Activated CD4-positive, alpha-beta memory T cell treated with anti-CD3 and anti-CD28 coated beads for 36 hours (primary cell): ENCODE measurements at regions of chr2 and their contacts with region 1.

Region 1: GRCh38 chr2:55419679-55420438 is at the start of gene CCDC88A:
- DNase-seq: peak; percentile 92
- H3K4me3 Mint-ChIP-seq: peak within 1 kb of the TSS; percentile 81
- H3K27ac Mint-ChIP-seq: peak within 1 kb of the TSS; percentile 69
- H3K4me1 Mint-ChIP-seq: peaks cover 23% of the 10 kb centered on the region
- H3K27me3 Mint-ChIP-seq: peaks cover 4% of the 10 kb centered on the region
- total RNA-seq, gene CCDC88A: 13.2 to 14.1 TPM

Region 2: GRCh38 chr2:55090702-55091101 is 329.2 kb before region 1 on chr2:
- CTCF ChIA-PET with region 1: no interaction called
- POLR2A ChIA-PET with region 1: no interaction called
- intact Hi-C with region 1: no loop called
- DNase-seq: no peak
- H3K4me3 Mint-ChIP-seq: no peak overlapping the region
- H3K27ac Mint-ChIP-seq: no peak overlapping the region
- H3K4me1 Mint-ChIP-seq: peaks cover 8% of the 10 kb centered on the region
- H3K27me3 Mint-ChIP-seq: no peaks in the 10 kb centered on the region

Region 3: GRCh38 chr2:55232084-55232862 is 187.6 kb before region 1 on chr2 and contains the starts of genes CLHC1 and RPS27A:
- CTCF ChIA-PET with region 1: no interaction called
- POLR2A ChIA-PET with region 1: no interaction called
- intact Hi-C with region 1: loop called (anchors 1 kb)
- DNase-seq: peak; percentile 95
- H3K4me3 Mint-ChIP-seq: peak within 1 kb of the TSS; percentile 96
- H3K27ac Mint-ChIP-seq: peak within 1 kb of the TSS; percentile 94
- H3K4me1 Mint-ChIP-seq: peaks cover 60% of the 10 kb centered on the region
- H3K27me3 Mint-ChIP-seq: no peaks in the 10 kb centered on the region
- total RNA-seq, gene CLHC1: 5.5 to 7.5 TPM
- total RNA-seq, gene RPS27A: 1,372 to 1,402 TPM

Region 4: DNA sequence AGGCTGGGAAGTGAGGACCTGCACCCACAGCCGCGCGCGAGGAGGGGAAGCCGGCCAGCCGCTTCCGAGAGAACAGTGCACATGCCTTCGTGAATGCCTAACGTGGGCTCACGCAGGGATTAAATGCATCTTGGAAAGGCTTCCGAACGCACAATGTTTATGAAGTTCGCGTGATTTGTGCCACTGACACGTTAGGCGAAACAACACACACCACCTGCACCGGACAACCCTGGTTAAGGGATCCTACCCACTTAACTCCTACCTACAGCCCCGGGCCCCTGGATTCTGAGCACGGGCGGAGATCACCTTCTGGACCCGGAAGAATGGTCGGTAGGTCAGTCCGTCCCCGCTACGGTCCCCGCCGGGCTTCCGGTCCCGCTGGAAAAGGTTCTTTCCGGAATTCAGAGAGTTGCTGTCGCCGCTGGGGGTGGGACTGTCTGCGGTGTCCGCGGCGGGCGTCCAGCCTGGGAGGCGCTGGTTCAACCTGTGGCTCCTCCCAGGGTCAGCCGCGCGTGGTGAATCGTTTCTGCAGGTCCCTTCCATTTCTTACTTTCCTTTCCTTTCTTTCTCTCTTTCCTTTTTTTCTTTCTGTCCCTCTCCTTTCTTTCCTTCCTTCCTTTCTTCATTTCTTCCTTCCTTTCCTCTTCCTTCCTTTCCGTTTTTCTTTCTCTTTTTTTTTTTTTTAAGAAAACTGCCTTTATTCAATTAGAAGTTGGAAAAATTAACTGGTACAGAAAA is 150.8 kb before region 1 on chr2 and contains the start of gene MTIF2:
- CTCF ChIA-PET with region 1: interaction called, 3 read pairs
- POLR2A ChIA-PET with region 1: interaction called, 7 read pairs
- intact Hi-C with region 1: loop called (anchors 1 kb)
- DNase-seq: peak; percentile 95
- H3K4me3 Mint-ChIP-seq: peak within 1 kb of the TSS; percentile 93
- H3K27ac Mint-ChIP-seq: peak within 1 kb of the TSS; percentile 88
- H3K4me1 Mint-ChIP-seq: peaks cover 7% of the 10 kb centered on the region
- H3K27me3 Mint-ChIP-seq: peaks cover 2% of the 10 kb centered on the region
- total RNA-seq, gene MTIF2: 42.7 to 43.2 TPM

Region 5: GRCh38 chr2:55282110-55282917 is 137.5 kb before region 1 on chr2:
- CTCF ChIA-PET with region 1: no interaction called
- POLR2A ChIA-PET with region 1: no interaction called
- intact Hi-C with region 1: loop called (anchors 5 kb)
- DNase-seq: peak; percentile 90
- H3K4me3 Mint-ChIP-seq: peak overlapping the region; percentile 84
- H3K27ac Mint-ChIP-seq: peak overlapping the region; percentile 91
- H3K4me1 Mint-ChIP-seq: peaks cover 22% of the 10 kb centered on the region
- H3K27me3 Mint-ChIP-seq: no peaks in the 10 kb centered on the region

Region 6: DNA sequence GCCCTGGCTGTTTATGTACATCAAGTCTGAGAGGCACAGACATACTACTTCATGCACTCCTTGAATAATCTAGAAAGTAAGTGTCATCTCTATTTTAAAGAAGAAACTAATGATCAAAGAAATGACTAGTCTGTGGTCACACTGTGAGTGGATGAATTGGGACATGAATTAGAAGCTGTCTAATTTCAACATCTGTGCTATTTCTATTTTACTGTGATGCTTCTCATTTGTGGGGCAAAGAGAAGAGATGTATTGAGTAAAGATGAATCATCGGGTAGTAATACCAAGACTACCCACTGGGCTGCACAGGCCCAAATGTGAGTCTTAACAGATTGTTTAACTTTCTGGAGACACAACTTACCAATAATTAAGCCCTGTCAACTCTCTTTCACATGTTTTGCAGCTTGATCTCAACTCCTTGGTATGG is 108.4 kb before region 1 on chr2:
- CTCF ChIA-PET with region 1: no interaction called
- POLR2A ChIA-PET with region 1: no interaction called
- intact Hi-C with region 1: loop called (anchors 1 kb)
- DNase-seq: peak; percentile 65
- H3K4me3 Mint-ChIP-seq: no peak overlapping the region
- H3K27ac Mint-ChIP-seq: no peak overlapping the region
- H3K4me1 Mint-ChIP-seq: peaks cover 22% of the 10 kb centered on the region
- H3K27me3 Mint-ChIP-seq: no peaks in the 10 kb centered on the region

Region 7: GRCh38 chr2:55431982-55432627 is 12.2 kb after region 1 on chr2:
- CTCF ChIA-PET with region 1: interaction called, 4 read pairs
- POLR2A ChIA-PET with region 1: interaction called, 5 read pairs
- intact Hi-C with region 1: loop called (anchors 1 kb)
- DNase-seq: no peak
- H3K4me3 Mint-ChIP-seq: no peak overlapping the region
- H3K27ac Mint-ChIP-seq: no peak overlapping the region
- H3K4me1 Mint-ChIP-seq: peaks cover 8% of the 10 kb centered on the region
- H3K27me3 Mint-ChIP-seq: no peaks in the 10 kb centered on the region

Region 8: GRCh38 chr2:55519938-55520885 is 100.4 kb after region 1 on chr2:
- CTCF ChIA-PET with region 1: no interaction called
- POLR2A ChIA-PET with region 1: interaction called, 4 read pairs
- intact Hi-C with region 1: loop called (anchors 1 kb)
- DNase-seq: peak; percentile 55
- H3K4me3 Mint-ChIP-seq: peak overlapping the region; percentile 99
- H3K27ac Mint-ChIP-seq: peak overlapping the region; percentile 95
- H3K4me1 Mint-ChIP-seq: peaks cover 9% of the 10 kb centered on the region
- H3K27me3 Mint-ChIP-seq: no peaks in the 10 kb centered on the region